T-cell (primary cell): ENCODE measurements at regions of chr22 and their contacts with region 1.

Region 1: DNA sequence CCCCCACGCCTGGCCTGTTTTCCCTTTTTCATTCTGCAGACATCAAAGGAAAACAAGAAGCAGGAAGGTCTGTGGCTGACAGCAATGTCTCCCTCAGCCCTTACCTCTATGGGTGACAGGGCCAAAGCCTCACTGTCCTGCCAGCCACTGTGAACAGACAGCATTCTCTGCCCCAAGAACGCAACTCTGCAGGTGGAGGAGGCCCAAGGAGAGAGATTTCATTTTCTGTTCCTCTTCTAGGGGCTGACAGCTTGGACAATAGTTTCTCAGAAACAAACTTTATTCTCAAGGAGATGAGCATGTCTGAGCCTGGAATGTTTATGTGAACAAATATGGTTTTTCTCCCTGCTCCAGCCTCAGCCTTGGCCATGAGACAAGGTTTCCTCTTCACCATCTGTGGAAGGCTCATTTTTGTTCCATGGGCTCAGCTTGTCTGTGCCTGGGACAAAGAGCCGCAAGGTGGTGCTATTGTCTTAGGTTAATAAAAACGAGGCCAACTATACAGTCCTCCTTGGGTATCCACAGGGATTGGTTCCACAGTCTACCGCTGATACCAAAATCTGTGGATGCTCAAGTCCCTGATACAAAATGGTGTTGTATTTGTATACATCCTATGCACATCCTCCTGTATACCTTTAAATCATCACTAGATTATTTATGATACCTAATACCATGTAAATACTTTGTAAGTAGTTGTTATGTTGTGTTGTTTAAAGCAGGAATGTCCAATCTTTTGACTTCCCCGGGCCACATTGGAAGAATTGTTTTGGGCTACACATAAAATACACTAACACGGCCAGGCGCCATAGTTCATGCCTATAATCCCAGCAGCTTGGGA is 5.8 kb downstream of the PIWIL3 start:
- DNase-seq: peak in 25 of 35 experiments; percentile 4 to 65 (median 23)
- ATAC-seq: peak in 3 of 4 experiments; percentile 48 to 67 (median 54)
- H3K4me3 ChIP-seq: no peak overlapping the region
- H3K4me3 Mint-ChIP-seq: no peak overlapping the region
- H3K27ac ChIP-seq: no peak overlapping the region
- H3K27ac Mint-ChIP-seq: no peak overlapping the region
- H3K4me1 ChIP-seq: no peaks in the 10 kb centered on the region
- H3K4me1 Mint-ChIP-seq: no peaks in the 10 kb centered on the region
- H3K27me3 ChIP-seq: peaks cover 0 to 26% of the 10 kb centered on the region in 2 experiments
- H3K27me3 Mint-ChIP-seq: peaks cover 5 to 15% of the 10 kb centered on the region in 2 donors

Region 2: GRCh38 chr22:24827296-24827695 is 58.5 kb after region 1 on chr22:
- CTCF ChIA-PET with region 1: interaction called in 1 of 2 experiments, 4 read pairs
- POLR2A ChIA-PET with region 1: interaction called in 1 of 2 experiments, 13 read pairs
- DNase-seq: no peak
- ATAC-seq: no peak
- H3K4me3 ChIP-seq: no peak overlapping the region
- H3K4me3 Mint-ChIP-seq: no peak overlapping the region
- H3K27ac ChIP-seq: no peak overlapping the region
- H3K27ac Mint-ChIP-seq: no peak overlapping the region
- H3K4me1 ChIP-seq: no peaks in the 10 kb centered on the region
- H3K4me1 Mint-ChIP-seq: no peaks in the 10 kb centered on the region
- H3K27me3 ChIP-seq: peaks cover 0 to 5% of the 10 kb centered on the region in 2 experiments
- H3K27me3 Mint-ChIP-seq: peaks cover 0 to 6% of the 10 kb centered on the region in 2 donors

Region 3: DNA sequence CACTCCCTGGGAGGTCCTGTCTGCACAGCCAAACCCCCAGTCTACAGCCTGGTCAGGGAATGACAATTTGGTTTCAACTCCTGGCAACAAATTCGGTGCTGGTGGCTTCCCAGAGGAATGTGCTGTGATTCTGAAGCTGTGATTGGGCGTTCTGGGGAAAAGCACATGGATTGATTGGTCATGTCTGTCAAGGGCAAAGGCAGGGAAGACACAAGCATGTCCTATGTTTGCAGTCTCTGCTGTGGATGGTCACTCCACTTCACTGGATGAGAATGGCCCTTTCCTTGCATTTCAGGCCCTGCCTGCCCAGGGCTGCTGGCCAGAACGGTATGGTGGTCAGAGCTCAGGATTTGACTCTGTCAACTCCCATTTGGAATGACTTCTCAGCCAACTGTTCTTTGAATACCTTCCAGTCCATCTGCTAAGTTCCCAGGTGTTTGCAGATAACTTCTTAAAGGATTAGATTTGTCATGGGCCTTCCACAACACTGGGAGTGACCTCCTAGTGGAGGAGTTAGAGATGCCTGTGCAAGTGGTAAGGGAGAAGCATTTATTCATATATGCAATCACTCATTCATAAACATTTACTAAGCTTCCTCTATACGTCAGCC is 79.9 kb after region 1 on chr22:
- CTCF ChIA-PET with region 1: interaction called, 7 to 10 read pairs
- POLR2A ChIA-PET with region 1: no interaction called
- DNase-seq: no peak
- ATAC-seq: no peak
- H3K4me3 ChIP-seq: no peak overlapping the region
- H3K4me3 Mint-ChIP-seq: no peak overlapping the region
- H3K27ac ChIP-seq: no peak overlapping the region
- H3K27ac Mint-ChIP-seq: no peak overlapping the region
- H3K4me1 ChIP-seq: peaks cover 0 to 19% of the 10 kb centered on the region in 2 experiments
- H3K4me1 Mint-ChIP-seq: peaks cover 0 to 20% (median 9%) of the 10 kb centered on the region in 3 donors
- H3K27me3 ChIP-seq: peaks cover 0 to 4% of the 10 kb centered on the region in 2 experiments
- H3K27me3 Mint-ChIP-seq: no peaks in the 10 kb centered on the region